Gastrocnemius medialis (tissue), 4 donors: ENCODE measurements at regions of chr3 and their contacts with region 1.

Region 1: DNA sequence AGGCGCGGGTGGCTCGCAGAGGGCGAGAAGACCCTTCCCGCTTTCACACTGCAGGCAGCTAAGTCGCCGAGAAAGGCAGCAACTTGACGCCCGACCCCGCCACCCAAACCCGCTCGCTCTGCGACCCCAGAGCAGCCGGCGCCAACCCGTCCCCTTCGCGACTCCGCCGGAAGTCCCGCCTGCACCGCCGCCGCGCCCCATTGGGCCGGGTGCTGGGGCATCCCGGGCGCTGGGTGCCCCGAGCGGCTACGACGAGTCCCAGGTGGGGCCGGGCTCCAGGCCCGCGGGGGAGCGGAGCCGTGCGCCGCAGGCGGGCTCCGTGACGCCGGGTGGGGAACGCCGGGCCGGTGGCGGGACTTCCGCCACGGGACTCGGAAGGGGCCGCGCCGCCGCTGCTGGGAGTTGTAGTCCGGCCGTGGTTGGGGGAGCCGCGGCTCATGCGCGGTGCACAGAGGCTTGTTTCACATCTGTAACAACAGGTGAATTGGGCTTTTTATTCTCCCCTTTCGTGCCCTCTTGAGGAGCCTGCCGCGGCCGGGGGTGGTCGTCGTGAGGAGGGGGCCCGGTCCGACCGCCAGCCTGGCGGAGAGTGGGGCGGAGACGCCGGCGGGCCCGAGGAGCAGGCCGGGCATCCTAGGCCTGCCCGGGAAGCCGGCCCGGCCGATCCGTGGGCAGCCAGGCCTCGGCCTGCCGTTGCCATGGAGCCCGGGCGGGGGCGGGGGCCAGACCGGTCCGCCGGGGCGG is at the start of gene DHX30:
- DNase-seq: peak; percentile 77 to 81
- ATAC-seq: peak; percentile 90 to 93
- H3K4me3 ChIP-seq: peak within 1 kb of the TSS; percentile 79 to 94 (median 86)
- H3K27ac ChIP-seq: peak within 1 kb of the TSS; percentile 86 to 96 (median 94)
- H3K4me1 ChIP-seq: peaks cover 7 to 14% of the 10 kb centered on the region in 2 donors
- H3K27me3 ChIP-seq: no peaks in the 10 kb centered on the region
- CTCF ChIP-seq: no peak
- POLR2A ChIP-seq: peak; percentile 69 to 89
- total RNA-seq, gene DHX30: 45.7 to 91.1 (median 67.9) TPM

Region 2: DNA sequence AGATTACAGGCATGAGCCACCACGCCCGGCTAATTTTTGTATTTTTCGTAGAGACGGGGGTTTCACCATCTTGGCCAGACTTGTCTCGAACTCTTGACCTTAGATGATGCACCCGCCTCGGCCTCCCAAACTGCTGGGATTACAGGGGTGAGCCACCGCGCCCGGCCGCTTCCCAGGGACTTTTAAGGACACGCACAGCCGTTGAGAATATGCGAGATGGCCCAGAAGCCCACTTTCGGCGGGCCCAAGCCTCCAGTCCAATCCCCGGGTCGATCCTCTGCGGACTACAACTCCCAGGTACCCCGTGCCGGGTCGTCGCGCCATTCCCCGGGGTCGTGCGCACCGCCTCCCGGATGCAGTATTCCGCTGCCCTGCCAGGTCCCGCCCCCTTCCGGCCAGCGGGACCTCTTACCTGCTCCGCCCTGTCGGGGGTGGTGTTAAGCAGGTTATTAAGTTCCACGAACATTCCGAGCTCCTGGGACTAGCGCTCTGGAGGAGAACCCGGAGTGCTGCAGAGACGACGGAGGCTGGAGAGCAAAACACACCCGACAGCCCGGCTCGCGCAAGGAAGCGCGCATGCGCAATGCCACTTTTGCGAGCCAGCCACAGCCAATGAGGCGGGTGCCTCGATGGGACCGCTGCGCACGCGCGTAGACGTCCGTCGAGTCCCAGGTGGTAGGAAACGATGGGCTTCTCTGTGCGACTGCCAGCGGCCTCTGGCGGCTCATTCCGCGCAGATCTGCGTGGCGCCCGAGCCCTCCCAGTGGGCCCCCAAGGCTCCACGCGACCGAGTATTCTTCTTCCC is 289.6 kb before region 1 on chr3 and contains the start of gene ELP6:
- in situ Hi-C with region 1: no loop called
- intact Hi-C with region 1: loop called (anchors 5 kb)
- DNase-seq: peak; percentile 94 to 96
- ATAC-seq: peak; percentile 97
- H3K4me3 ChIP-seq: peak within 1 kb of the TSS; percentile 59 to 93 (median 78)
- H3K27ac ChIP-seq: peak within 1 kb of the TSS; percentile 84 to 98 (median 94)
- H3K4me1 ChIP-seq: peaks cover 0 to 5% of the 10 kb centered on the region in 2 donors
- H3K27me3 ChIP-seq: no peaks in the 10 kb centered on the region
- CTCF ChIP-seq: peak in 3 of 5 experiments; percentile 32 to 43 (median 34)
- POLR2A ChIP-seq: peak; percentile 47 to 63
- total RNA-seq, gene ELP6: 16.9 to 31.1 (median 26.6) TPM

Region 3: DNA sequence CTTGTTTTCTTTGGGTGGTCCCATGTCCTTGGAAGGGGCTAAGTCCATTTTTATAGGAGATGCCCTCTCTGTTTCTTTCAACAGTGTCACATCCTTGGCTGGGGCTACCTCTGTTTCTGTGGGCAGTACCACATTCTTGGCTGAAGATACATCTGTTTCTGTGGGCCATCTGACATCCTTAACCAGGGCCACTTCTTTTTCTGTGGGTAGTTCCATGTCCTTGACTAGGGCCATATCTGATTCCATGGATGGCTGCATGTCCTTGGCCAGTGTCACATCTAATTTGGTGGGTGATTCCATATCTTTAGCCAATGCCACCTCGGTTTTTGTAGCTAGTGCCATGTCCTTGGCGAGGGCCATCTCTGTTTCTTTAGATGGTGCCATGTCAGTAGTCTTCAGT is 113.8 kb after region 1 on chr3:
- in situ Hi-C with region 1: no loop called
- intact Hi-C with region 1: no loop called
- DNase-seq: no peak
- ATAC-seq: no peak
- H3K4me3 ChIP-seq: no peak overlapping the region
- H3K27ac ChIP-seq: peak overlapping the region in 1 of 4 donors; percentile 16
- H3K4me1 ChIP-seq: peaks cover 9 to 16% of the 10 kb centered on the region in 2 donors
- H3K27me3 ChIP-seq: no peaks in the 10 kb centered on the region
- CTCF ChIP-seq: no peak
- POLR2A ChIP-seq: no peak

Region 4: GRCh38 chr3:47976135-47976732 is 173.3 kb after region 1 on chr3:
- in situ Hi-C with region 1: no loop called
- intact Hi-C with region 1: no loop called
- DNase-seq: no peak
- ATAC-seq: no peak
- H3K4me3 ChIP-seq: no peak overlapping the region
- H3K27ac ChIP-seq: peak overlapping the region in 1 of 4 donors; percentile 8
- H3K4me1 ChIP-seq: peaks cover 7% of the 10 kb centered on the region in 2 donors
- H3K27me3 ChIP-seq: no peaks in the 10 kb centered on the region
- CTCF ChIP-seq: no peak
- POLR2A ChIP-seq: no peak